ENCODE measurements at regions of chr2 and their contacts with region 1.

Region 1: GRCh38 chr2:27489498-27490397 is at the start of gene IFT172:
- DNase-seq: peak; percentile 99
- ATAC-seq: peak; percentile 96
- H3K4me3 ChIP-seq: peak within 1 kb of the TSS; percentile 48 to 60
- H3K27ac ChIP-seq: peak within 1 kb of the TSS in 1 of 2 donors; percentile 39
- H3K4me1 ChIP-seq: no peaks in the 10 kb centered on the region
- H3K27me3 ChIP-seq: no peaks in the 10 kb centered on the region
- total RNA-seq, gene IFT172: 24.8 to 45.7 TPM

Region 2: DNA sequence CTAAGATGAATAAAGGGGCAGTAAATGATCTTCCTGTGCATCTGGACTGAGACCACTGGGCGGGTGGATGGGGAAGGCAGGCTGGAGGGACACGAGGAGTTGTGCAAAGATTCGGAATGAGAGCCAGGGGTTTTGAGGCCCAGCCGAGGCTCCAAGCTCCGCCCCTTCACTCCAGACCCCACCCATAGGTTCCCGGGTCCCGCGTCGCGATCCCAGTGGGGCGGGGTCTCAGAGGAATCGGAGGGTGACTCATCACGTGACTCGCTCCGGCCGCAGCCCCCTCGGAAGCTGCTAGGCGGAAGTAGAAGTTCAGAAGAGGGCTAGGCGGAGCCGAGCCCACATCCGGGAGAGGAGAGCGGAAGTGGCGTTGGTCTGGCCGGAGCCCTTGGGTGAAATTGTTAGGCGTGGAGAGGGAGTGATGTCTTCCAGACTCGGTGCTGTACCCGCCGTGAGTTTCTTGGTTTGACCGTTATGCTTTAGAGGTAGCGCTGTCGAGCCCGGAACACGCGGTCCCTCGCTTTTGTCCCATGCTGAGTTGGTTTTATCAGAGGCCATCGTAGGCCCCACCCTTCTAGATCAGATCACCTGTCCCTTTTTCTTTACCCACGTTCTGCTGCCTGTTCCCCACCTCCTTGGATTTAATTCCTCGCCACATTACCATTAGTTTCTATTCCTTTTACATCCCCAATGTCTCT is 93.1 kb after region 1 on chr2 and contains the start of gene ZNF512:
- intact Hi-C with region 1: loop called in 1 of 2 experiments (anchors 10 kb)
- DNase-seq: peak; percentile 96 to 97
- ATAC-seq: peak; percentile 95
- H3K4me3 ChIP-seq: peak within 1 kb of the TSS; percentile 94 to 97
- H3K27ac ChIP-seq: peak within 1 kb of the TSS in 1 of 2 donors; percentile 48
- H3K4me1 ChIP-seq: peaks cover 0 to 3% of the 10 kb centered on the region in 2 donors
- H3K27me3 ChIP-seq: no peaks in the 10 kb centered on the region
- total RNA-seq, gene ZNF512: 29.5 to 41.7 TPM

Region 3: DNA sequence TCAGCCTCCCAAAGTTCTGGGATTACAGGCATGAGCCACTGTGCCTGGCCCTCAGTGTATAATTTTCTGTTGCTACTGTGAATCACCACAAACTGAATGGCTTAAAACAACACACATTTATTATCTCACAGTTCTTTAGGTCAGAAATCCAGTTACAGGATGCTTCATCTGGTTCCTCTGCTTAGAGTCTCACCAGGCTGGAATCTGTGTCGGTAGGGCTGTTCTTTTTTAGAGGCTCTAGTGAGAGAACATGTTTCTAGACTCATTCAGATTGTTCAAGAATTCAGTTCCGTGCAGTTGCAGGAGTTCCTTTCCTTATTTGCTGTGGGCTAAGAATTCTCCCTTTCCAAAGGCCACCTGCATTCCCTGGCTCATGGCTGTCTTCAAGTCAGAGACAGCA is 116.9 kb after region 1 on chr2:
- intact Hi-C with region 1: no loop called
- DNase-seq: no peak
- ATAC-seq: no peak
- H3K4me3 ChIP-seq: no peak overlapping the region
- H3K27ac ChIP-seq: no peak overlapping the region
- H3K4me1 ChIP-seq: no peaks in the 10 kb centered on the region
- H3K27me3 ChIP-seq: no peaks in the 10 kb centered on the region

Region 4: DNA sequence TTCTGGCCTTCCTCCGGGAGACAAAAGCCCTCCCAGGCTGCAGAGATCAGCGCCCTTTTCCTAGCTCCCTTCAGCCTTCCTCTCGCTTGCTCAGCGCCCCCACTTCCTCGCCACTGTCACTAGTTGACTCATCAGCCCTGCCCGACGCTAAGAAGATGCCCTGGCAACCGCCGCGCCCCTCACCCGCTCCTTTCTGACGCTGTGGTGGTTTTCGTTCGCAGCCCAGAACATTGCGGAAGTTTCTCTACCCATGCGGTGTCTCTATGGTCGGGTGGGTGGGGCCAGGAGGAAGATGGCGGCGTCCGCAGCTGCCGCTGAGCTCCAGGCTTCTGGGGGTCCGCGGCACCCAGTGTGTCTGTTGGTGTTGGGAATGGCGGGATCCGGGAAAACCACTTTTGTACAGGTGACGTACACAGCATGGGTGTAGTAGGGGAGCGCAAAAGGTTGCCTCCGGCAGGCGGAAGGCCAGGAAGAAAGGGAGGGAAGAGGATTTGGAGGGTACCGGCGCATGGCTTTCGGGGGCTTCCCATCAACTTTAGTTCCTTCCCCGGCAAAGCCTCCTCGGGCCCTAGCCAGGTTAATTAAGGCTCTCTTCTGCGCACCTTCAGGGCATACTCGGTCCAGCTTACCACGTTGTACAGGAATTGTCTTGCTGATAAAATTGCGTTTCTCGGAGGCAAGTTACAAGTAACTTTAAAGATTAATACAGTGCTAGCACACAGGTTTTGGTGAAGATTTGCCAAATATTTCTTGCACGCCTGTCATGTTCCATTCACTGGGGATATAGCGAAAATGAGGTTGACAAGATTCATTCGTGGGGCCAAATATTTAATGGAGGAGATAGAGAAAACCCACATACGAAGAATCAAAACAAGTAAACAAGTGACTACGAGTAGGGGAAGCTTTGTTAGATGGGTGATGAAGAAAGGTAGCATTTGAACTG is 139.3 kb after region 1 on chr2 and contains the starts of genes CCDC121 and GPN1:
- intact Hi-C with region 1: loop called in 1 of 2 experiments (anchors 10 kb)
- DNase-seq: peak; percentile 96
- ATAC-seq: peak; percentile 97
- H3K4me3 ChIP-seq: peak within 1 kb of the TSS; percentile 58 to 64
- H3K27ac ChIP-seq: peak within 1 kb of the TSS in 1 of 2 donors; percentile 38
- H3K4me1 ChIP-seq: no peaks in the 10 kb centered on the region
- H3K27me3 ChIP-seq: no peaks in the 10 kb centered on the region
- total RNA-seq, gene CCDC121: 2.2 to 3.6 TPM
- total RNA-seq, gene GPN1: 16.4 to 21.9 TPM